Calu3 (cell line): ENCODE measurements at regions of chr17 and their contacts with region 1.

Region 1: DNA sequence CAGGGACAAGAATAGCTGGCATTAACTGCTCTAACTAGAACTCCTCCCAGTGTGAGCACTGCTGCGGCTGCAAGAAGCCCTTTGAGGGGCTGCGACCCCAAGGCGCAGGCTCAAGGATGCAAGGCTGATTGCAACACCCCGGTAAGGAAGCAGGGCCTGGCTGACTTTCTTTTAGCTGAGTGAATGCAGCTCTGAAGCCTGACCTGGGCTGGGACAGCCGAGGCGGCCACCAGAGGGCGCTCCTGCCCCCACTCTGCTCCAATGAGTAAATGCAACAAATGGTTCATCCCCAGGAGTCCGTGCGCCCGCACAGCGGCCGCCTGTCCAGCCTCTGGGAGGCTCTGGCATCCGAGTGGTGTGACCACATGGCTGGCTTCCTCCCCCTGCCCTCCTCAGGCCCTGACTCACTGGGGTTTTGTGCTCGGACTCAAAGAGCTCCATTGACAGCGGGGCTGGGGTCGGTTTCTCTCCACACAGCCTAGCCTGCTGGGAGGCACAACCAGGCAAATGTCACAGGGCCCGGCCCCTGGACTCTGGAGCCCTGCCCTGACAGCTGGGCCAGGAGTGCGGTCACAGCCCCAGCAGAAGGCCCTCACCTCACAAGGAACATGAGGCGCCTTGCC is at the start of gene SMIM5:
- DNase-seq: peak; percentile 95
- H3K4me3 Mint-ChIP-seq: peak within 1 kb of the TSS; percentile 46
- H3K27ac Mint-ChIP-seq: peak within 1 kb of the TSS; percentile 78
- H3K4me1 Mint-ChIP-seq: peaks cover 14% of the 10 kb centered on the region
- H3K27me3 Mint-ChIP-seq: no peaks in the 10 kb centered on the region
- CTCF ChIP-seq: peak; percentile 92
- total RNA-seq, gene SMIM5: 1.9 and 3.5 TPM in 2 replicates

Region 2: DNA sequence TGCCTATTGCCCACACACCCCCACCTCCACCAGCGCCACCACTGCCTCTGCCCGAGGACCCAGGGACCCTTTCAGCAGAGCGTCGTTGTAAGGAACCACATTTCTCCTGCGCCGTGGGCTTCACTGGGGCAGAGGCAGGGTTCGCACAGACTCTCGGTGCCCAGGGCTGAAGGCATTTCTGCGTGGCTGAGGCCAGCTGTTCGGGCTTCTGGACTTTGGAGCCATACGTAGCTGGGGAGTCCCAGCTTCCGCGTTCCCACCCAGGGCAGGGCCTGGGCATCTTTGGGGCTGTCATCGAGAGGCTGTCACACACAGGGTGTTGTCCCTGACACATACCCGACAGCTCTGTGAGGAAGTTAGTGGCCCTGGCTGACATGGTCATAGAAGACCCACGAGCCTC is 15.8 kb before region 1 on chr17:
- CTCF ChIA-PET with region 1: interaction called, 26 read pairs
- intact Hi-C with region 1: no loop called
- DNase-seq: peak; percentile 93
- H3K4me3 Mint-ChIP-seq: peak overlapping the region; percentile 59
- H3K27ac Mint-ChIP-seq: peak overlapping the region; percentile 97
- H3K4me1 Mint-ChIP-seq: peaks cover 29% of the 10 kb centered on the region
- H3K27me3 Mint-ChIP-seq: no peaks in the 10 kb centered on the region
- CTCF ChIP-seq: no peak

Region 3: DNA sequence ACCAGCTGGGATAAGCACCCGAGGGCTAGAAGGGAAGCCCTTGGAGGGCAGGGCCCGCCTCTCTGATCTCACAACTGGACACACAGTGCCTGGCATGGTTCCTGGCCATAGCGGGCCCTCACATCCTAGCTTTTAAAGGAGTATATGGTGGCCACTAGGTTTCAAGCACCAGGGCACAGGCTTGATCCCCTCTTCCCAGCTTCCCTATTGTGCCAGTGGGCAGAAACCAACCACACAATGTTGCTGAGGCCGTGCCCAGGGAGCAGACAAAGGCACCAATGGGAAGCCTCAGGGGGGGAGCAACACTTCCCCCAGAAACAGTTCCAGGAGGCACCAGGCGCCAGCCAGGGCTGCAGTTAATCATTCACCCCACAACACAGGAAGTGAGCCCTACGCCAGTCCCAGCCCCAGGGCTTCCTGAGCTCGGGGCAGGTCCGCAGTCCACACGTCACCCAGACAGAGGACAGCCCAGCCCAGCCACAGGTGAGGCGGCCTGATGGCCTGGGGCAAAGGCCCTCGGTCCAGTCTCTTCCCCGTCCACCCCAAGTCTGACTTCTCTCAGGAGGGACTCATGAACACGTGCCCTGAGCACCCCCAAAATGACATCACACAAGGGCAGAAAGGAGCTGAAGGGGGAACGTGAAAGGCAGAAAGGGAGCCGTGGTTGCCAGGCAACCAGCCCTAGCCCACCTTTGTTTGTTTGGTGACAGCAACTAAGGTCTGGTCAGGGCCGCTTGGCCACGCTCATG is 13.1 kb after region 1 on chr17:
- CTCF ChIA-PET with region 1: interaction called, 119 read pairs
- intact Hi-C with region 1: no loop called
- DNase-seq: peak; percentile 96
- H3K4me3 Mint-ChIP-seq: peak overlapping the region; percentile 43
- H3K27ac Mint-ChIP-seq: peak overlapping the region; percentile 96
- H3K4me1 Mint-ChIP-seq: peaks cover 42% of the 10 kb centered on the region
- H3K27me3 Mint-ChIP-seq: no peaks in the 10 kb centered on the region
- CTCF ChIP-seq: no peak

Region 4: GRCh38 chr17:75652915-75653549 is 20.1 kb after region 1 on chr17:
- CTCF ChIA-PET with region 1: interaction called, 119 read pairs
- intact Hi-C with region 1: loop called (anchors 2 kb)
- DNase-seq: peak; percentile 63
- H3K4me3 Mint-ChIP-seq: no peak overlapping the region
- H3K27ac Mint-ChIP-seq: no peak overlapping the region
- H3K4me1 Mint-ChIP-seq: no peaks in the 10 kb centered on the region
- H3K27me3 Mint-ChIP-seq: no peaks in the 10 kb centered on the region
- CTCF ChIP-seq: peak; percentile 87

Region 5: DNA sequence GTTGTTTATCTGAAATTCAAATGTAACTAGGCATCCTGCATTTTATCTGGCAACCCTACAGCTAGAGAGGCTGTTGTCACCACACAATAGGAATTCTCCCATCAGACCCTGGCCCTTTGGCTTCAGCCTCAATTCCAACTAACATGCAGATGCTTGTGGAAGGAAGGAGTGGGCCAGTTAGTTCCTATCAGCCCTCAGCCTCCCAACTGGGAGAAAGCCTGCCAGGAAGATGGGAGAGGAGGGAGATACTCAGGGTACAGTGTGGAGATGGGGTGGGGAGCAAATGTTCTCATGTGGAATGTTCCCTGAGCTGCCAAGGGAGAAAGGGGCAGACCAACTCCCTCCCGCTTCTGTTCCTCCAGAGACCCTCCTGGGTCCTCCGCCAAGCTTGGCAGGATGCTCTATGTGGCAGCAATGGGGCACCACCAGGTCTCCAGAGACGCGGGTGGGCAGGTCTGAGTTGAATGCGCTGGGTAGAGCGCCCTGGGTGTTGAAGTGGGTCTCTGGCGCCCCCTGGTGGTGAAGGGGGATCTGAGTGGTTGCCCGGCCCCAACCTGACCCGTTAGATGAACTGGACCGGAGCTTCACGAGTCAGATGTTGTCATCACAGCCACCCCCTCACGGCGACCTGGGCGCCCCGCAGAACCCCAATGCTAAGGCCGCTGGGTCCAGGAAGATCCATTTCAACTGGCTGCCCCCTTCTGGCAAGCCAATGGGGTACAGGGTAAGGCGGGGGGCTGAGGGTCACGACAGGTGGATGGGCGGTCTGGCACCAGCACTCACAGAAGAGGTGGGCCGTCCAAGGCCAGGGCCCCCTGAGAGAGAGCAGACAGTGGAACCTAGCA is 116.8 kb after region 1 on chr17:
- CTCF ChIA-PET with region 1: interaction called, 17 read pairs
- intact Hi-C with region 1: no loop called
- DNase-seq: peak; percentile 75
- H3K4me3 Mint-ChIP-seq: no peak overlapping the region
- H3K27ac Mint-ChIP-seq: no peak overlapping the region
- H3K4me1 Mint-ChIP-seq: peaks cover 5% of the 10 kb centered on the region
- H3K27me3 Mint-ChIP-seq: no peaks in the 10 kb centered on the region
- CTCF ChIP-seq: peak; percentile 94